Left lung (tissue), 14 donors: ENCODE measurements at regions of chr2 and their contacts with region 1.

Region 1: DNA sequence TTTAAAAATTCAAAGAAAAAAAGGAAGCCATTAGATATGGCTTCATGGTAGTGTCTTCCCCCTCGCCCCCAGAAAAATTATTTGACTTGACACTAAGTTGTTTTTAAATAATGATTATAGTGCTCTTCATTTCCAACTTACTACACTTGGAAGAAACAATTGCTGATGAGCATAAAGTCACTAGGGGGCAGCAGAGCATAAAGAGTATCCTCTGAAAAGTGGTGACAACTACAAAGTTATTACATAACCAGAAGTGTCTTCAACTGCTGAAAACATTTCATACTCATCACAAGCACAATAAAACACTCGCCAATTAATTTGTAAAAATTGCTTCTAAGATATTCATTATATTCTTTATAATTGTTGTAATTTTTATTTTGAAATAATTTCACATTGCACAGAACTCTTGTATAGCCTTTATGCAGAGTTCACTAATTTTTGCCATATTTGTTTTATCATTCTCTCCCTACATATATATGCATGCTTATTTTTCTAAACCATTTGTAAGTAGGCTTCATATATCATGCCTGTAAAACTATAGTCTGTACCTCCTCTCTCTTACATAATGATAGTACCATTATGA is 54.9 kb downstream of the EXOC6B start:
- DNase-seq: peak in 2 of 4 donors; percentile 59 to 75
- ATAC-seq: peak; percentile 90
- H3K4me3 ChIP-seq: no peak overlapping the region
- H3K27ac ChIP-seq: no peak overlapping the region
- H3K4me1 ChIP-seq: peaks cover 0 to 3% of the 10 kb centered on the region in 2 donors
- H3K27me3 ChIP-seq: no peaks in the 10 kb centered on the region
- CTCF ChIP-seq: peak; percentile 63 to 84

Region 2: DNA sequence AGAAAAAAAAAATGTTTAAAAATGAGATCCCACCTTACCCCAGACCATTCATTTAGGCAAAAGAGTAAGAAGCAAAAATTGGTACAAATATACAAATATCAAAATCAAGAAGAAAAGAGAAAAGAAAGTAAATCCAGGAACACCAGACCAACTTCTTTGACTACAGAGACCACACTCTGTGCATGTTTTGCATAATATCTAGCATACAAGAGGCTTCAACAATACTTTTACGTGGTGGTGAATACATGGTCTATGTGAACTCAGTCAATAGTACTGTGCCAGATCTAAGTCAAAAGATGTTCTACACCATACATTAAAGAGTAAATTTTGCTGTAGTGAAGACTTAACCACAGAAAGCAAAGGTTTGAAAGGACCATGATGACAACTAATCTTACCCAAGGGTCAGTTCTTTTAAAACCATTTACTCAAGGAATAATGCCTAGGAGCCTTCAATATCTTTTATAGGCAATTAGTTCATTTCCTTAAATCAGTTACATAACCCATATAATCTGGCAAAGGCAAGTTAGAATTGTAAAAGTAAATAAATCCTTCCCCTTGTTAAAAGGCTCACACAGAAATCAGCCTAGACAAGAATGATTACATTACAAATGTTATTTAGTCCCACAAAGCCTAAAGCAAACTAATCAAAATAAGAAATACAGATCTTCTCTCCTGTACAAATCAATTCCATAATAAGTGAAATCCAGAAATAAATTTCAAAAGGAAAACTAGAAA is 60.4 kb before region 1 on chr2:
- intact Hi-C with region 1: no loop called
- DNase-seq: no peak
- ATAC-seq: no peak
- H3K4me3 ChIP-seq: no peak overlapping the region
- H3K27ac ChIP-seq: no peak overlapping the region
- H3K4me1 ChIP-seq: no peaks in the 10 kb centered on the region
- H3K27me3 ChIP-seq: no peaks in the 10 kb centered on the region
- CTCF ChIP-seq: no peak

Region 3: DNA sequence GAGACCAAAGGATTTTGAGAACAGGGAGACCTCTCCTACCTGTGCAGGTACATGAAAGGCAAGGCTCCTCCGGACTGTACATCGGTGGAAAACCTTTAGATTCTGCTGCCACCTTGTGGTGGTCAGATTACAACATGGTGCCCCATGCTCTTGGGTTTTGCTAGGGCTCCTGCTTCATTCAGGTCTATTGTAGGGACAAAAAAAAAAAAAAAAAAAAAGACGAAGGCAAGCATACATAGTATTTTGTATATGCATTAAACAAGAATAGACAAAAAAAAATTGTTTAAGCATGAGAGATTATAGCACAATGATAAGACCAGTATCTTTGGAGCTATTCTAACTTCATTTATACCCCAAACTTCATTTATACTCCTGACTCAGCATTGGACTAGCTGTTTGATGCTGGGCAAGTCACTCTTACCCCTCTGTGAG is 88.9 kb after region 1 on chr2:
- intact Hi-C with region 1: loop called in 1 of 2 experiments (anchors 5 kb)
- DNase-seq: peak in 2 of 4 donors; percentile 38 to 73
- ATAC-seq: peak; percentile 86
- H3K4me3 ChIP-seq: no peak overlapping the region
- H3K27ac ChIP-seq: no peak overlapping the region
- H3K4me1 ChIP-seq: peaks cover 0 to 9% of the 10 kb centered on the region in 2 donors
- H3K27me3 ChIP-seq: peaks cover 19 to 60% of the 10 kb centered on the region in 2 donors
- CTCF ChIP-seq: peak; percentile 47 to 67